SK-N-SH (cell line): ENCODE measurements at regions of chr14 and their contacts with region 1.

Region 1: DNA sequence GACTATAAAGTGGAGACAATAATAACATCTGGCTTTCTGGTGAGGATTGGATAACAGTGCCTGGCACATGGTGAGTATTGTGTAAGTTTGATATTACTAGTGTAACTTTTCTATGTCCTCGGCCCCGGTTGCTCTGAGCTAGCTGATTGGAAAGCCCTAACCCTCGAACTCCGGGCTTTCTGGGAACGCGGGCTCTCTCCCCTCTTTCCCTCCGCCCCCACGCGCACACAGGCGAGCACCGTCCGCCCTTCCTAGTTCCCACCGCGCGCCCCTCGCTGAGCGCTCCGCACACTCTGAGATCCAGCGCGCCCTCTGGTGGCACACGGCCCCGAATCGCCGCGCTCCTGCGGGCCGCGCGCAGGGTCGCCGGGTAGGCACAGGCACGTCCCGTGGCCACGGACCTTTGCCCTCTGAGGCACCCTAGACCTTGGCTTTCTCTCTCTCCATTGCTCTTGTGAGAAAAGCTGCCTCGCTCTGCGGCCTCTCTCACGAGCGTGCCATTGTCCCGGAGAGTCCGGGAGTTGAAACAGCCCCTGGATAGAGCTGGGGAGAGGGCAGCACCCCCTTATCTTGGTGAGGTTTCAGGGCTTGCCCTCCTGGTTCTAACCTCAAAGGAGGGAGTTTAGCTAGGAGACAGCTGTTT is 23.2 kb upstream of the ESRRB start:
- DNase-seq: peak; percentile 90
- H3K4me3 ChIP-seq: peak overlapping the region; percentile 9 to 46; a peak in 2 of 4 replicates
- H3K27ac ChIP-seq: no peak overlapping the region
- H3K4me1 ChIP-seq: peaks cover 7 to 12% of the 10 kb centered on the region in 2 experiments; a peak in 3 of 4 replicates
- H3K27me3 ChIP-seq: peaks cover 22% of the 10 kb centered on the region; the same call in 1 of the 2 replicates
- CTCF ChIP-seq: peak; percentile 80
- EP300 ChIP-seq: no peak
- RAD21 ChIP-seq: peak; percentile 76

Region 2: GRCh38 chr14:76056128-76056527 is 296.6 kb before region 1 on chr14:
- CTCF ChIA-PET with region 1: interaction called, 221 read pairs
- POLR2A ChIA-PET with region 1: no interaction called
- DNase-seq: no peak
- H3K4me3 ChIP-seq: no peak overlapping the region
- H3K27ac ChIP-seq: no peak overlapping the region
- H3K4me1 ChIP-seq: peaks cover 0 to 11% of the 10 kb centered on the region in 2 experiments; a peak in 2 of 4 replicates
- H3K27me3 ChIP-seq: no peaks in the 10 kb centered on the region
- CTCF ChIP-seq: peak; percentile 39; the same call in 1 of the 2 replicates
- EP300 ChIP-seq: no peak
- RAD21 ChIP-seq: no peak

Region 3: GRCh38 chr14:76102011-76102379 is 250.8 kb before region 1 on chr14:
- CTCF ChIA-PET with region 1: interaction called, 14 read pairs
- POLR2A ChIA-PET with region 1: no interaction called
- DNase-seq: no peak
- H3K4me3 ChIP-seq: no peak overlapping the region
- H3K27ac ChIP-seq: no peak overlapping the region
- H3K4me1 ChIP-seq: peaks cover 0 to 11% of the 10 kb centered on the region in 2 experiments; a peak in 1 of 4 replicates
- H3K27me3 ChIP-seq: no peaks in the 10 kb centered on the region; the same call in 1 of the 2 replicates
- CTCF ChIP-seq: no peak
- EP300 ChIP-seq: no peak
- RAD21 ChIP-seq: peak; percentile 48; the same call in 1 of the 2 replicates

Region 4: DNA sequence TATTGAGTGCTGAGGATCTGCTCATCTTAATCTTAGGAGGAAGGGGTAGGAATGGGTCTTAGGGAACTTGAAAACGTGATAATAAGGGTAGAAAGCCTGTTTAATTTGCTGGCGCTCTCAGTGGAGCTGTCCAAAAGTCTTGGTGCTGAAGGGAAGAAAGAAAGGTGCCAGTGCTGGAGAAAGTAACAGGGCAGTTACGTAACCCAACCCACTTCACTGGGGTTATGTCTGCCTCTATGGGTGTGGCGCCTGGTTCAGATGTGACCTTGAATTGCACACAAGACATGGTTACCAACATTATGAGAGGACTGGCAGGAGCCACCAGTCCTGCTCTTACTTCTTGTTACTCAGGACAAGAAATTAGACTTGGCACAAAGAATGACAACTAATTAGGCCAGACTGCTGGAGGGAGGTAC is 219.7 kb before region 1 on chr14:
- CTCF ChIA-PET with region 1: interaction called, 10 read pairs
- POLR2A ChIA-PET with region 1: no interaction called
- DNase-seq: no peak
- H3K4me3 ChIP-seq: no peak overlapping the region
- H3K27ac ChIP-seq: no peak overlapping the region
- H3K4me1 ChIP-seq: peaks cover 0 to 4% of the 10 kb centered on the region in 2 experiments; a peak in 1 of 4 replicates
- H3K27me3 ChIP-seq: peaks cover 61% of the 10 kb centered on the region
- CTCF ChIP-seq: no peak
- EP300 ChIP-seq: no peak
- RAD21 ChIP-seq: no peak

Region 5: GRCh38 chr14:76375947-76376404 is 23.2 kb after region 1 on chr14 and contains the start of gene ESRRB:
- CTCF ChIA-PET with region 1: interaction called, 18 read pairs
- POLR2A ChIA-PET with region 1: no interaction called
- DNase-seq: peak; percentile 54
- H3K4me3 ChIP-seq: peak within 1 kb of the TSS; percentile 42 to 55
- H3K27ac ChIP-seq: no peak within 1 kb of the TSS
- H3K4me1 ChIP-seq: peaks cover 3 to 7% of the 10 kb centered on the region in 2 experiments; a peak in 2 of 4 replicates
- H3K27me3 ChIP-seq: peaks cover 85% of the 10 kb centered on the region
- CTCF ChIP-seq: no peak
- EP300 ChIP-seq: no peak
- RAD21 ChIP-seq: no peak
- polyA plus RNA-seq, gene ESRRB: 0.05 and 0.06 TPM in 2 replicates

Region 6: DNA sequence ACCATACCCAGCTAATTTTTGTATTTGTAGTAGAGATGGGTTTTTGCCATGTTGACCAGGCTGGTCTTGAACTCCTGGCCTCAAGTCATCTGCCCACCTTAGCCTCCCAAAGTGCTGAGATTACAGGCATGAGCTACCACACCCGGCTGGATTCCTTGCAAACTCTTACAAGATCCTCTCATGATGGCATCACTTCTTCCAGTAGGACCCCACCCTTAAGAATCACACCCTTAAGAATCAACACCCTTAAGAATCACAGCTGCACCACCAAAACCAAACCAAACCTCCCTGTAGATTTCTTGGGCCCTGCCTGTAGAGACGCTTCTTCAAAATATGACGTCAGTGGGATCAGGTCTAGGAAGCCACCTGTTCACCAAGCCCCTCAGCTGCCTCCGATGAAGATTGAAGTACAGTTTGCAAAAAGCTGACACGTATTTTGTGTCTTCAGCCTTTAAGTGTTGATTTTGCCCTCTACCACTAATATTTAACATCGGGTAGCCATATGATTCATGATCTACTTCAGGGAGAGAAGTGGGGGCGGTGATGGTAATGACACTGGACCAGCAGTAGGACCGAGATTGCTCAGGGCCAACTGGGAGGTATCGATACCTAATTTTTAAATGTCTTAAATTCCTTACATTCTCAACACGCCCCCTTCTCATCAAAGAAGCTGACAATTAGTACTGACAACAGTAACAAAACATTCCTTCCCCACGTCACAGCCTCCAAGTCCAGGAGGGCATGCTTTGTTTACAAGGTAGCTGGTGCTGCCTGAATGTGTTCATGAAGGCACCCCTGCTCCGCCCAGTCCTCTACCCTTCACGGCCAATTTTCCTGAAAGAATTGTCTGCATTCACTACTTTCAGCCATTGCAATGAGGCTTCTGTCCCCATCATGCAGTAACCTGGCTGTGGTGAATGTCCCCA is 80.3 kb after region 1 on chr14:
- CTCF ChIA-PET with region 1: no interaction called
- POLR2A ChIA-PET with region 1: no interaction called
- DNase-seq: no peak
- H3K4me3 ChIP-seq: no peak overlapping the region
- H3K27ac ChIP-seq: no peak overlapping the region
- H3K4me1 ChIP-seq: peaks cover 0 to 3% of the 10 kb centered on the region in 2 experiments; a peak in 1 of 4 replicates
- H3K27me3 ChIP-seq: peaks cover 7% of the 10 kb centered on the region
- CTCF ChIP-seq: no peak
- EP300 ChIP-seq: no peak
- RAD21 ChIP-seq: no peak

Region 7: GRCh38 chr14:76647697-76648298 is 295.0 kb after region 1 on chr14:
- CTCF ChIA-PET with region 1: interaction called, 38 read pairs
- POLR2A ChIA-PET with region 1: no interaction called
- DNase-seq: peak; percentile 62
- H3K4me3 ChIP-seq: no peak overlapping the region
- H3K27ac ChIP-seq: no peak overlapping the region
- H3K4me1 ChIP-seq: peaks cover 0 to 9% of the 10 kb centered on the region in 2 experiments; a peak in 1 of 4 replicates
- H3K27me3 ChIP-seq: no peaks in the 10 kb centered on the region
- CTCF ChIP-seq: peak; percentile 83
- EP300 ChIP-seq: no peak
- RAD21 ChIP-seq: peak; percentile 78

Region 8: GRCh38 chr14:76669770-76670169 is 317.0 kb after region 1 on chr14:
- CTCF ChIA-PET with region 1: no interaction called
- POLR2A ChIA-PET with region 1: no interaction called
- DNase-seq: no peak
- H3K4me3 ChIP-seq: no peak overlapping the region
- H3K27ac ChIP-seq: no peak overlapping the region
- H3K4me1 ChIP-seq: no peaks in the 10 kb centered on the region; a peak in 1 of 4 replicates
- H3K27me3 ChIP-seq: peaks cover 9% of the 10 kb centered on the region; the same call in 1 of the 2 replicates
- CTCF ChIP-seq: no peak
- EP300 ChIP-seq: no peak
- RAD21 ChIP-seq: no peak